Lower lobe of right lung (tissue), 2 donors: ENCODE measurements at regions of chr3 and their contacts with region 1.

Region 1: DNA sequence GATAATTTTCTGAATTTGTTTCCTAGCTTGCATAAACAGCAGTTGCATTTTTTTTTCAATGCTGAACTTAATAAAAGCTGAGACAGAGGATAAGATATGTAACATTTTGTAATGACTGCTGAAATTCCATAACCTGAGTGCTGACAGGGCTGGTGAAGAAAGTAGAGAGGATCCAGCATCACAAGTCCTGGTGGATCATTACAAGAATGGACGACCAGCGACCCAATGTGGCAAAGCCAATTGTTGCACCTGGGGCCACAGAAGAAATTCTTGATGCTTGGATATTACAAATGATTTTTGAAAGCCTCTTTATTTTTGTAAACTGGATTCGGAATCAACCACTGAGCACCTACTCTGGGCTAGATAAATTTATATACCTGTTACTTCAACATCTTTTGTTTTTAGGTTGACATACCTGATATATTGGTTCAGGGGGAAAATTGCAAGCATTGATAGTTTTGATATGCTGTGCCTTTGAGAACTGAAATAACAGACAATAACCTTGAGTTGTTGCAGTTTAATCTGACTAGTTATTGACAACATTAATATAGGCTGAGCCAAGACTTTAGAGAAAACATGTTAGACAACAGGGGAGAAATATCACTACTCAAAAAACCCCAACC is 3.9 kb upstream of the ACTL6A start:
- DNase-seq: no peak
- ATAC-seq: no peak
- H3K4me3 ChIP-seq: no peak overlapping the region
- H3K27ac ChIP-seq: no peak overlapping the region
- H3K4me1 ChIP-seq: peaks cover 4% of the 10 kb centered on the region
- H3K27me3 ChIP-seq: no peaks in the 10 kb centered on the region
- CTCF ChIP-seq: peak; percentile 87

Region 2: GRCh38 chr3:179432021-179432420 is 126.8 kb before region 1 on chr3:
- intact Hi-C with region 1: no loop called
- DNase-seq: no peak
- ATAC-seq: peak; percentile 51 to 75
- H3K4me3 ChIP-seq: no peak overlapping the region
- H3K27ac ChIP-seq: no peak overlapping the region
- H3K4me1 ChIP-seq: peaks cover 68% of the 10 kb centered on the region
- H3K27me3 ChIP-seq: no peaks in the 10 kb centered on the region
- CTCF ChIP-seq: no peak

Region 3: GRCh38 chr3:179446501-179446900 is 112.4 kb before region 1 on chr3:
- intact Hi-C with region 1: loop called (anchors 10 kb)
- DNase-seq: no peak
- ATAC-seq: no peak
- H3K4me3 ChIP-seq: no peak overlapping the region
- H3K27ac ChIP-seq: no peak overlapping the region
- H3K4me1 ChIP-seq: peaks cover 31% of the 10 kb centered on the region
- H3K27me3 ChIP-seq: no peaks in the 10 kb centered on the region
- CTCF ChIP-seq: peak; percentile 25